Caco-2 (cell line): ENCODE measurements at regions of chr11 and their contacts with region 1.

Region 1: GRCh38 chr11:12769834-12770345 is 95.7 kb downstream of the TEAD1 start:
- DNase-seq: peak in 1 of 2 experiments; percentile 22
- H3K4me3 ChIP-seq: no peak overlapping the region
- H3K4me3 Mint-ChIP-seq: no peak overlapping the region
- H3K27ac Mint-ChIP-seq: no peak overlapping the region
- H3K4me1 ChIP-seq: peaks cover 39% of the 10 kb centered on the region
- H3K4me1 Mint-ChIP-seq: peaks cover 27% of the 10 kb centered on the region
- H3K27me3 ChIP-seq: no peaks in the 10 kb centered on the region
- H3K27me3 Mint-ChIP-seq: no peaks in the 10 kb centered on the region
- CTCF ChIP-seq: no peak

Region 2: DNA sequence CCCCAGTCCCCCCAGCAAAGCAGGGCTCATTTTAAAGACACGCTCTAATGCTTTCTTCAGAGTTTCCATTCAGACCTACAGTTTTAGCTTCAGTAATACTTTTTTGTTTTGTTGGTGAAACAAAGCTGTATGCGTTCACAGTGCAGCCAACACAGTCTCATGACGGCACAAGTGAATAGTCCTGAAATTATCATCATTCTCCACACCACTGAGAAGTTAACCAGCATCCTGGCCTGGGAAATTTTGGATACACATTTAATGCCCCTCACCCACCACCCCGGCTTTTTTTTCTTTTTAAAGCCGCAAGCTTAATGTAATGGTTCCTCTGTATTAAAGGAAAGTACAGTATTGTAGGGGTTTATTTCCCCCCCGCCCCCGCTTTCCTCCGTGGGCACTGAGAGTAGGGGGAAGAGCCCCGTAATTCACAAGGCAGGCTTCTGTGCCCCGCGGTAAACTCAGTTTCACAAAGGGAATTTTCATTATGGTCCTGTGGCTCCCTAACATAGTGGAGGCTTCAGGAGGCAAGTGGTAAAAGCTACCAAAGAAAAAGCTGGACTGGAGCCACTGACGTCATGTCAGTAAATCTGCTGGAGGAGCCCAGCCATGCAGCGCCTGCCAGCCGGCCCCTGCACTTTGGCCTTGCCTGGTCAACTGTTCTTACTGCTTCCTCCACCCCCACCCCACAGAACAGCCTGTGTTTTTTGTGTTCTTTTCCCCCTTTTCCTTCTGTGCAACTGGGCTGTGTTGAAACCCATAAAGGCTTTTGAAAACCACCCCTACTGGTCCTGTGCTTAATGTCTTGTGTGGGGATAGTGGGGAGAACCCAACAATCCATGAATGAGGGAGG is 77.4 kb before region 1 on chr11:
- CTCF ChIA-PET with region 1: no interaction called
- POLR2A ChIA-PET with region 1: no interaction called
- intact Hi-C with region 1: loop called (anchors 5 kb)
- DNase-seq: peak; percentile 80 to 86
- H3K4me3 ChIP-seq: no peak overlapping the region
- H3K4me3 Mint-ChIP-seq: peak overlapping the region; percentile 62
- H3K27ac Mint-ChIP-seq: peak overlapping the region; percentile 82
- H3K4me1 ChIP-seq: peaks cover 88% of the 10 kb centered on the region
- H3K4me1 Mint-ChIP-seq: peaks cover 84% of the 10 kb centered on the region
- H3K27me3 ChIP-seq: no peaks in the 10 kb centered on the region
- H3K27me3 Mint-ChIP-seq: no peaks in the 10 kb centered on the region
- CTCF ChIP-seq: no peak

Region 3: DNA sequence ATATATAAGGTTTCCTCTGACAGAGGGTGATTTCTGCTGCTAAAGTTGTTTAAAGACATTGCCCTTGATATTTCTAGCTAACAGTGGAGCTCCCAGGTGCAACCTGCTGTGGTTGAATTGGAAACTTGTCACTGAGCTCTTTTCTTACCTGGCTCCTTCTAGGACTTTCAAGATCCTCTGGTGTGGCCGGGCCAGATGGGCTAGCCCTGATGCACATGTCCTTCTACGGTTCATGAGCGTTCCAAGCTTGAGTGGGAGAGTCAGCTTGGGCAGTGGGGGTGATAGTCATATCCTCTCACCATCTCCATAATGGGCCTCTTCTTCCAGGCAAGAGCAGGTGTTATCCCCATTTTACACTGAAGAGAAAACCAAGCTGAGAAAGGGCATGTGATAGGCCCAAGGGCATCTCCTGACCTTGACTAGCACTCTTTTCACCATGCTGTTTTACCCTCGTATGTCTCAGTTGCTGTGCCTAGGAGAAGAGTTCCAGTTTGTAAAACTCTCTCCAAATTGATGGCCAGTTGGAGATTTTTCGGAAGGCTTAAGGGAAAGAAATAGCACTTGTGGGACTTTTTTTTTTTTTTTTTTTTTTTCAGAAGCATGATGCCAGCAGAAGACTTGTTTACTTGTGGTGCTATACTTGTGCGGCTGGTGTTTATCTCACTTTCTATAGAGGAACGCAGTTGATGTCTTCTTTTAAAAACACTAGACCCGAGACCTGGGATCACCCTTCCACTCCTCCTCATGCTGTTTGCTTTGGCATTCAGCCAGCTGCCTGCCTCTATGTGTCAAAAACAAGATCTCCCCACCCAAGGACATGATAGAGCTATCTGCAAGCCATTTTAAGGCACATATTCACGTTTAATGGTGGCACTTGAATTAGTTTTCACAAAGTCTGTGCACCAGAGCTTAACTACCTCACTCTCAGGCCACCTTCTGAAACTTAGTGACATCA is 63.1 kb before region 1 on chr11:
- CTCF ChIA-PET with region 1: no interaction called
- POLR2A ChIA-PET with region 1: no interaction called
- intact Hi-C with region 1: no loop called
- DNase-seq: no peak
- H3K4me3 ChIP-seq: no peak overlapping the region
- H3K4me3 Mint-ChIP-seq: no peak overlapping the region
- H3K27ac Mint-ChIP-seq: no peak overlapping the region
- H3K4me1 ChIP-seq: no peaks in the 10 kb centered on the region
- H3K4me1 Mint-ChIP-seq: peaks cover 30% of the 10 kb centered on the region
- H3K27me3 ChIP-seq: no peaks in the 10 kb centered on the region
- H3K27me3 Mint-ChIP-seq: no peaks in the 10 kb centered on the region
- CTCF ChIP-seq: no peak